ENCODE measurements at regions of chr6 and their contacts with region 1.

Region 1: GRCh38 chr6:42104095-42104806 is 38.2 kb downstream of the C6orf132 start:
- DNase-seq: peak; percentile 81
- ATAC-seq: peak; percentile 73
- H3K4me3 ChIP-seq: peak overlapping the region; percentile 3 to 65 (median 47)
- H3K4me3 Mint-ChIP-seq: peak overlapping the region; percentile 75
- H3K27ac ChIP-seq: no peak overlapping the region
- H3K27ac Mint-ChIP-seq: peak overlapping the region; percentile 10
- H3K4me1 ChIP-seq: peaks cover 6 to 11% of the 10 kb centered on the region in 2 donors
- H3K4me1 Mint-ChIP-seq: peaks cover 8% of the 10 kb centered on the region
- H3K27me3 ChIP-seq: peaks cover 0 to 25% (median 2%) of the 10 kb centered on the region in 4 experiments
- H3K27me3 Mint-ChIP-seq: peaks cover 19% of the 10 kb centered on the region
- CTCF ChIP-seq: peak; percentile 90

Region 2: DNA sequence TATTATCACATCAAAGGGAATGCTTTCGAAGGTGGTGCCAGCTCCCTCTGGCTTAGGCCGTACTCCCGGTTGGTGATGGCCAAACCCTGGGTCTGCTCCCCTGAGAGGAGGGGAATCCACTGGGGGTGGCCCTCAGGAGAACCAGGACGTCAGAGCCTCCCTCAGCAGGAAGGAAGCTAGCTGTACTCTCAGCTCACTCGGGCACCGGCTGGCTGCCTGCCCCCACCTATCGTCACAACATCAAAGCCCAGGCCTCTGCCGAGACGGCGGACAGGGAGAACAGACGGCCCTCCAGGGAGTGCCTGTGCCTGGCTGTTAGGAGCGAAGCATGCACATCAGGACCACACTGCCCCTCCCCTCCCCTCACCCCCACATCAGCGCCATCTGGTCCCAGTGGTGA is 347.9 kb before region 1 on chr6:
- CTCF ChIA-PET with region 1: no interaction called
- POLR2A ChIA-PET with region 1: no interaction called
- intact Hi-C with region 1: no loop called
- DNase-seq: no peak
- ATAC-seq: no peak
- H3K4me3 ChIP-seq: no peak overlapping the region
- H3K4me3 Mint-ChIP-seq: no peak overlapping the region
- H3K27ac ChIP-seq: no peak overlapping the region
- H3K27ac Mint-ChIP-seq: no peak overlapping the region
- H3K4me1 ChIP-seq: no peaks in the 10 kb centered on the region
- H3K4me1 Mint-ChIP-seq: no peaks in the 10 kb centered on the region
- H3K27me3 ChIP-seq: no peaks in the 10 kb centered on the region
- H3K27me3 Mint-ChIP-seq: no peaks in the 10 kb centered on the region
- CTCF ChIP-seq: no peak

Region 3: GRCh38 chr6:42093582-42094329 is 10.5 kb before region 1 on chr6:
- CTCF ChIA-PET with region 1: interaction called, 11 read pairs
- POLR2A ChIA-PET with region 1: no interaction called
- intact Hi-C with region 1: no loop called
- DNase-seq: no peak
- ATAC-seq: no peak
- H3K4me3 ChIP-seq: no peak overlapping the region
- H3K4me3 Mint-ChIP-seq: no peak overlapping the region
- H3K27ac ChIP-seq: no peak overlapping the region
- H3K27ac Mint-ChIP-seq: peak overlapping the region; percentile 10
- H3K4me1 ChIP-seq: no peaks in the 10 kb centered on the region
- H3K4me1 Mint-ChIP-seq: no peaks in the 10 kb centered on the region
- H3K27me3 ChIP-seq: no peaks in the 10 kb centered on the region
- H3K27me3 Mint-ChIP-seq: peaks cover 4% of the 10 kb centered on the region
- CTCF ChIP-seq: no peak

Region 4: GRCh38 chr6:42166444-42167141 is 62.3 kb after region 1 on chr6:
- CTCF ChIA-PET with region 1: interaction called, 8 read pairs
- POLR2A ChIA-PET with region 1: interaction called, 3 read pairs
- intact Hi-C with region 1: loop called (anchors 1 kb)
- DNase-seq: peak; percentile 79
- ATAC-seq: peak; percentile 76
- H3K4me3 ChIP-seq: no peak overlapping the region
- H3K4me3 Mint-ChIP-seq: no peak overlapping the region
- H3K27ac ChIP-seq: no peak overlapping the region
- H3K27ac Mint-ChIP-seq: no peak overlapping the region
- H3K4me1 ChIP-seq: no peaks in the 10 kb centered on the region
- H3K4me1 Mint-ChIP-seq: no peaks in the 10 kb centered on the region
- H3K27me3 ChIP-seq: no peaks in the 10 kb centered on the region
- H3K27me3 Mint-ChIP-seq: peaks cover 7% of the 10 kb centered on the region
- CTCF ChIP-seq: peak; percentile 89

Region 5: DNA sequence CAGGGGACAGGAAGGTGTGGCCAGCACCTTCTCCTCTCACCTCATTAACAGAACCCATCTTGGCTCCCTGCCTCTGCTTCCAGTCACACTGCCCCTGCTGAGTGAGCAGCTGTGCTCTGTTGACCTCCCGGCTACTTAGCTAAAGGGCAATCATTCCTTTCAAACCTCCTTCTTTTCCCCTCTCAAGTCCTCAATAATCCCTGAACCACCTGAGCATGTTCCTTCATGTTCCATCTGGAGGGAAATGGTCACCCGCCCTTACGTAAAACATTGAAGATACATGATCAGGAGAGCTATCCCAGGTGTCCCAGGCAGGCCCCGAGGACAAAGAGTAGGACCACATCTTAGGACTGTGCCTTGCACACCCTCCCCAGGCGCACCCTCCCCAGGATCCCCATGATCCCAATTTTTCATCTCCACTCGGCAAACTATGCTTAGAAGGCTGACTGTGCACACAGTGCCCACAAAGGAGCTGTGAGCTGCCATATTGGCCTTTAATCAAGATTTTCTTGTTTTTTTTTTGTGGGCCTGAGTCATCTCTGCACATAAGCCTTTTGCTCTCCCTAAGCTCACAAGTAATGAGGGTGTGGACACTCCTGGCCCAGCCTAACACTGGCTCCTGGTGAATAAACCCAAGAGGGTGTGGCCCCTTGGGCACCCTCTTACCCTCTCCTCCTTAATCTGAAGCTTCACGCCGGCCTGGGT is 135.3 kb after region 1 on chr6:
- CTCF ChIA-PET with region 1: no interaction called
- POLR2A ChIA-PET with region 1: no interaction called
- intact Hi-C with region 1: no loop called
- DNase-seq: no peak
- ATAC-seq: no peak
- H3K4me3 ChIP-seq: no peak overlapping the region
- H3K4me3 Mint-ChIP-seq: no peak overlapping the region
- H3K27ac ChIP-seq: no peak overlapping the region
- H3K27ac Mint-ChIP-seq: no peak overlapping the region
- H3K4me1 ChIP-seq: no peaks in the 10 kb centered on the region
- H3K4me1 Mint-ChIP-seq: no peaks in the 10 kb centered on the region
- H3K27me3 ChIP-seq: no peaks in the 10 kb centered on the region
- H3K27me3 Mint-ChIP-seq: no peaks in the 10 kb centered on the region
- CTCF ChIP-seq: no peak

Measured in B cell (primary cell).